H1 (cell line): ENCODE measurements at regions of chrX and their contacts with region 1.

Region 1: DNA sequence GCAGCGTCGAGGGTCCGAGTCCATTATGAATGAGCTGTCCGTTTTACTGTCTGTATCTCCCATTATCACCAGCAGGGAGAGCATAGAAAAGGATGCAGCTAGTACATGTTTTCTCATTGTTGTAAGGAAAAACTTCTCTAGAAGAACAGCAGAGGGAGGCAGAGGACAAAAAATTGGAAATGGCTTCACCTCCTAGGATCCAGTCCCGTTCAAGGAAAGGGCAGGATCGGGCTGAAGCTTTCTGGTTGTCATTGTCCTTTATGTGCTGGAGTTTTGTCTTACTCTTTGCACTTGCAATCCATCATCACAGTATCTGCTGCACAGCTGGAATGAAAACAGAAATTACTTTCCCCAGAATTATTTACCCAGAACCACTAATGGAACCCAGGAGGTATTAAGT is 14.7 kb downstream of the NDP start:
- DNase-seq: no peak
- H3K4me3 ChIP-seq: no peak overlapping the region
- H3K27ac ChIP-seq: no peak overlapping the region
- H3K4me1 ChIP-seq: no peaks in the 10 kb centered on the region
- H3K27me3 ChIP-seq: no peaks in the 10 kb centered on the region
- CTCF ChIP-seq: peak in 2 of 3 experiments; percentile 65 to 91; a peak in 3 of 4 replicates
- EP300 ChIP-seq: no peak
- POLR2A ChIP-seq: no peak
- RAD21 ChIP-seq: peak; percentile 85 to 87

Region 2: DNA sequence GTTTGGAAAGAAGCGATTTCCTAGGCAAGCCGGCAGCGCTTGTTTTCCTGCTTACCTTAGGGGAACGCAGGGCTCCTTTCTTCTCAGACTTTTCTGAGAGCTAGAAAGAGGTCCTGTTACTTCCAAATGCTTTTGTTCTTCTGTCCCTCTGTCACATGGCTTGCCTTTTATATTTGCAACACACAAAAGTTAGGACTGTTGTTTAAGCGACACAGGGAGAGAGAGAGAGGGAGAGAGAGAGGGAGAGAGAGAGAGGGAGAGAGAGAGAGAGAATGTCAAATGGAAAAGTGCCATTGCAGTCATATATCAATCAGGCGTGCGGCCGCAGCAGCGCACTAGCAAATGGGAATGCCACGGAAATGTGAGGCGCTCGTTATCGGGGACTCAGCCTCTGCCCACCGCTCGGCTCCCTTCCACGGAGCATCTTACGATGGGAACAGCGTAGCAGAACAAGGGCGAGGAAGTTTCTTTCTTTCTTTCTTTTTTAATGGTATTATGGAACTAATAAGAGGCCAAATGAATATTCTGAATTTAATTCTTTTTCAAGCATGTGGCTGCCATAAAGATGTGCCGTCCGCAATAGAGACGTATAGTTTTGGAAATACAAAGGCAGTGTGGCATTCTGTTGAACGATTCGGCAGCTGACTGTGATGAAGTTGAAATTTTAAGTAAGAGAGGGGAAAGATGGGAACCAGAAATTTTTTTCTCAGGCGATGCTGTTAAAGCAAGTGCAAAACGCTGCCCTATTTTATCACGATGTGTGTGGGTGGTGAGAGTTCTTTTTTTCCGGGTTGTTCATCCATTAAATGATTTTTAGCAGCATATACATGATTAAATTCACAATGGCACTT is 14.9 kb after region 1 on chrX and contains the start of gene NDP:
- CTCF ChIA-PET with region 1: interaction called, 15 read pairs
- POLR2A ChIA-PET with region 1: no interaction called
- DNase-seq: no peak
- H3K4me3 ChIP-seq: peak within 1 kb of the TSS; percentile 32 to 56 (median 35); a peak in 7 of 8 replicates
- H3K27ac ChIP-seq: no peak within 1 kb of the TSS
- H3K4me1 ChIP-seq: peaks cover 0 to 9% (median 1%) of the 10 kb centered on the region in 4 experiments; a peak in 3 of 7 replicates
- H3K27me3 ChIP-seq: peaks cover 0 to 12% (median 1%) of the 10 kb centered on the region in 4 experiments; a peak in 2 of 7 replicates
- CTCF ChIP-seq: no peak
- EP300 ChIP-seq: no peak
- POLR2A ChIP-seq: no peak
- RAD21 ChIP-seq: no peak
- total RNA-seq, gene NDP: 0.29 and 0.82 TPM in 2 replicates

Region 3: DNA sequence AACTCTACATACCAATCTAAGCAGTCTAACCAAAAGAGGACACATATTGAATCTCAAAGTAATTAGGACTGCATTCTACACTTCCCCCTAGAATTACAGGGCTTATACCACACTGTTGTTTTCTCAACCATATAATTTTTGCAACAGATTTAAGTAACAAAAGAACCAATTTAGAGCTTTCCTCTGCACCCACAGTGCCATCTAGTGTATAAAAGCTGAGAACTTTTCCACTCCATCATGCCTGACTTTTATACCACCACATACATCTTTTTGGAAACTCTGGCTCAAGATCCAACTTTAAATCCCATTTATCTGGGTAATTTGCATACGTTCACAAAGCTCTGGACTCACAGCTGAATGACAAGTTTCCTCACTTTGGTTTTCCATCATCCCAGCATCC is 285.5 kb after region 1 on chrX:
- CTCF ChIA-PET with region 1: interaction called, 25 read pairs
- POLR2A ChIA-PET with region 1: no interaction called
- DNase-seq: no peak
- H3K4me3 ChIP-seq: no peak overlapping the region
- H3K27ac ChIP-seq: no peak overlapping the region
- H3K4me1 ChIP-seq: no peaks in the 10 kb centered on the region; a peak in 1 of 7 replicates
- H3K27me3 ChIP-seq: no peaks in the 10 kb centered on the region
- CTCF ChIP-seq: peak in 2 of 3 experiments; percentile 13 to 21; a peak in 2 of 4 replicates
- EP300 ChIP-seq: no peak
- POLR2A ChIP-seq: no peak
- RAD21 ChIP-seq: peak; percentile 55 to 63